Heart left ventricle (tissue), 16 donors: ENCODE measurements at regions of chr1 and their contacts with region 1.

Region 1: DNA sequence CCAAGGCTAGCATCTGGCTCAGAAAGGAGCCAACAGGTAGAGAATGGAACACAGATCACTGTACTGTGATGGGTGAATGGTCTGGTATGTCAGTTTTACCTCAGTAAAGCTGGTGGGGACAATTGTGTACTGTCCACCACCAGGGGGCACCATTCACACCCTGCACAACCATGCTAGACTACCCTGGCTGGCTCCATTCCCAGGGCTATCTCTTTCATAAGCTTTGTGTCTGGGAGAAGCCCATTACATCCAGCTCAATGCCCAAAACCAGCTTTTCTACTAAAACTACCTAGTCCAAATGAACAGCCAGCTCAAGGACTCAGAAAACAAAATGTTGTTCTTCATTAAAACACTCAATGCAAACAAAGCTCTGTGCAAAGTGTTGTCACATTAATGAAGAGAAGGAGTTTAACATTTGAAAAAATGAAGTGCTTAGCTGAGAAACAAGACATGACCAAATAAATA is 62.0 kb upstream of the RASAL2 start:
- DNase-seq: peak; percentile 84 to 95 (median 91)
- ATAC-seq: peak; percentile 68 to 89 (median 82)
- H3K4me3 ChIP-seq: no peak overlapping the region
- H3K27ac ChIP-seq: peak overlapping the region in 1 of 12 donors; percentile 53
- H3K4me1 ChIP-seq: peaks cover 0 to 56% (median 8%) of the 10 kb centered on the region in 12 donors
- H3K27me3 ChIP-seq: no peaks in the 10 kb centered on the region
- CTCF ChIP-seq: peak; percentile 79 to 94 (median 88)
- POLR2A ChIP-seq: no peak

Region 2: GRCh38 chr1:177984136-177984525 is 47.8 kb before region 1 on chr1:
- intact Hi-C with region 1: loop called in 1 of 10 experiments (anchors 5 kb)
- DNase-seq: peak in 4 of 5 donors; percentile 42 to 65 (median 51)
- ATAC-seq: peak; percentile 66 to 96 (median 92)
- H3K4me3 ChIP-seq: peak overlapping the region in 8 of 12 donors; percentile 6 to 50 (median 24)
- H3K27ac ChIP-seq: peak overlapping the region in 4 of 12 donors; percentile 6 to 40 (median 22)
- H3K4me1 ChIP-seq: peaks cover 0 to 33% (median 5%) of the 10 kb centered on the region in 12 donors
- H3K27me3 ChIP-seq: no peaks in the 10 kb centered on the region
- CTCF ChIP-seq: no peak
- POLR2A ChIP-seq: no peak

Region 3: DNA sequence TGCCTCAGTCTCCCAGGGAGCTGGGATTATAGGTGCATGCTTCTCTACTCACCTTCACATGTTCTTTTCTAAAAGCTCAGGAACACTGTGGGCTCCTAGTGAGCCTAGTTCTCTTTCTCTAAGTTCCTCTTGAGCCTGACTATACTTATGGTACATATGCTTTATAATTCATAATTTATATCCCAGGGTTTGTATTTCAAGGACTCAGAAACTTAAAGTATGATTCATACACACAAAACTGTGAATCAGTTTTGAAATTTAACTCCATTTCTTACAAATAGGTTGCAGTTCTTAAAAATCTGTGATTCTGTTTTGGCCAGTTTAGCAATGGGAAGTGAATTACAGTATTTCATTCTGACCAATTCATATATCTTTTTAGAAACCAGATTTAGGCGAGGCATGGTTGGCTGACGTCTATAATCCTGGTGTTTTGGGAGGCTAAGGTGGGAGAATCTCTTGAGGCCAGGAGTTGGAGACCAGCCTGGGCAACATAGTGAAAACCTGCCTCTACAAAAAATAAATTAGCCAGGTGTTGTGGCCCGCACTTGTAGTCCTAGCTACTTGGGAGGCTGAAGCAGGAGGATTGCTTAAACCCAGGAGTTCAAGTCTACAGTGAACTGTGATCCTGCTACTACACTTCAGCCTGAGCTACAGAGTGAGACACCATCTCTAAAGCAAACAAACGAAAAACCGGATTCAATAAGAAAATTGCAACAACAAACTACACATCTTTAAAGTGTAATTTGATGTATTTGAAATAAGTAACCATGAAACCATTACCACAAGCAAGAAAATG is 77.7 kb after region 1 on chr1:
- intact Hi-C with region 1: no loop called
- DNase-seq: no peak
- ATAC-seq: no peak
- H3K4me3 ChIP-seq: no peak overlapping the region
- H3K27ac ChIP-seq: no peak overlapping the region
- H3K4me1 ChIP-seq: peaks cover 0 to 45% (median 23%) of the 10 kb centered on the region in 12 donors
- H3K27me3 ChIP-seq: no peaks in the 10 kb centered on the region
- CTCF ChIP-seq: no peak
- POLR2A ChIP-seq: no peak

Region 4: DNA sequence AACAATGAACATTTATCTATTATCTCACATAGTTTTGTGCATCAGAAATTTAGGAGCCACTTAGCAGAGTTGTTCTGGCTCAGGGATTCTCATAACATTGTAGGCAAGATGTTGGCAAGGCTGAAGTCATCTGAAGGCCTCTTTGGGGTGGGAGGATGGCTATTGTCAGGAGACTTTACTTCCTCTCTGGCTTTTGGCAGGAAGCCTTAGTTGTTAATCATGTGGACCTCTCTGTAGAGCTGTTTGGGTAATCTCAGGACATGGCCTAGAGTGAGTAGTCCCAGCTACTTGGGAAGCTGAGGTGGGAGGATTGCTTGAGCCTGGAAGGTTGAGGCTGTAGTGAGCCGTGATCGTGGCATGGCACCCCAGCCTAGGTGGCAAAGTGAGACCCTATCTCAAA is 102.2 kb after region 1 on chr1:
- intact Hi-C with region 1: loop called in 1 of 10 experiments (anchors 5 kb)
- DNase-seq: peak in 3 of 5 donors; percentile 36 to 64 (median 56)
- ATAC-seq: peak; percentile 50 to 97 (median 94)
- H3K4me3 ChIP-seq: no peak overlapping the region
- H3K27ac ChIP-seq: peak overlapping the region in 8 of 12 donors; percentile 9 to 80 (median 45)
- H3K4me1 ChIP-seq: peaks cover 3 to 50% (median 31%) of the 10 kb centered on the region in 12 donors
- H3K27me3 ChIP-seq: no peaks in the 10 kb centered on the region
- CTCF ChIP-seq: no peak
- POLR2A ChIP-seq: no peak

Region 5: DNA sequence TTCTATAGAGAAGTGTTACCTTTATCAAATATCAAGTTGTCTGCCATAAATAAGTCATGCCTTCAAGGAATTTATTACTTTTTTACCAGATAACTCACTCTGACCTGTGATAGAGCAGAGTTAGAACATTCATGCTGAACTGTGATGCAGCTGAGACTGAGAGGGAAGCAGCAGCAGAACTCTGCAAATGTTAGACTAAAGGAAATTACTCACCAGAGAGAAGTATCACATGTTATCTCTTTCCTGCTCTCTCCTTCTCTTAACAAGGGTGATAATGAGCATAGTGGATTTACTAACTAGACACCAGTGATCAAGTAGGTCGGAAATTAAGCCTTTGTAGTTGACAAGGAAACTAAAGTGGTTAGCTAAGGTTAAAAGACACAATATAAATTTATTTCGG is 243.7 kb after region 1 on chr1:
- intact Hi-C with region 1: loop called in 9 of 10 experiments (anchors 5 to 10 kb)
- DNase-seq: no peak
- ATAC-seq: no peak
- H3K4me3 ChIP-seq: no peak overlapping the region
- H3K27ac ChIP-seq: peak overlapping the region in 1 of 12 donors; percentile 1
- H3K4me1 ChIP-seq: peaks cover 0 to 47% (median 20%) of the 10 kb centered on the region in 12 donors
- H3K27me3 ChIP-seq: no peaks in the 10 kb centered on the region
- CTCF ChIP-seq: no peak
- POLR2A ChIP-seq: no peak

Region 6: DNA sequence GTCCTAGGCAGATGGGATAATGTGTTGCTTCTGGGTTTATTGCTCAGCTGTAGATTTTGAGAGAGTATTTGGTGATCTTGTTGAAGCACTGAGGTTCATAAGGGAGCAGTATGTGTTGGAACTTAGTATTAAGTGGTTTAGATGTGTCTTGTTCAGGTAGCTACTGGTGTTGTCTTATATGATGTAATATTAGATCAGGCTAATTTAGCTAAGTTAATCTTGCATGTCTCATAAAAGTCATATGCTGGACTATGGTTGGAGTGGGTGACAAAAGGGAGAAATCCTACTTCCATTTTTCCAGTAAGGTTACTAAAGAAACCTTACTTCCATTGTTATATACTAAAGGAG is 268.4 kb after region 1 on chr1:
- intact Hi-C with region 1: loop called in 1 of 10 experiments (anchors 5 kb)
- DNase-seq: no peak
- ATAC-seq: no peak
- H3K4me3 ChIP-seq: no peak overlapping the region
- H3K27ac ChIP-seq: peak overlapping the region in 1 of 12 donors; percentile 31
- H3K4me1 ChIP-seq: peaks cover 0 to 37% (median 4%) of the 10 kb centered on the region in 12 donors
- H3K27me3 ChIP-seq: no peaks in the 10 kb centered on the region
- CTCF ChIP-seq: no peak
- POLR2A ChIP-seq: no peak